Activated naive CD8-positive, alpha-beta T cell treated with anti-CD3 and anti-CD28 coated beads, Interleukin-2, amount 10 ng/mL, durations not matched to agents 7 days and 5 days (primary cell): ENCODE measurements at regions of chr4 and their contacts with region 1.

Region 1: DNA sequence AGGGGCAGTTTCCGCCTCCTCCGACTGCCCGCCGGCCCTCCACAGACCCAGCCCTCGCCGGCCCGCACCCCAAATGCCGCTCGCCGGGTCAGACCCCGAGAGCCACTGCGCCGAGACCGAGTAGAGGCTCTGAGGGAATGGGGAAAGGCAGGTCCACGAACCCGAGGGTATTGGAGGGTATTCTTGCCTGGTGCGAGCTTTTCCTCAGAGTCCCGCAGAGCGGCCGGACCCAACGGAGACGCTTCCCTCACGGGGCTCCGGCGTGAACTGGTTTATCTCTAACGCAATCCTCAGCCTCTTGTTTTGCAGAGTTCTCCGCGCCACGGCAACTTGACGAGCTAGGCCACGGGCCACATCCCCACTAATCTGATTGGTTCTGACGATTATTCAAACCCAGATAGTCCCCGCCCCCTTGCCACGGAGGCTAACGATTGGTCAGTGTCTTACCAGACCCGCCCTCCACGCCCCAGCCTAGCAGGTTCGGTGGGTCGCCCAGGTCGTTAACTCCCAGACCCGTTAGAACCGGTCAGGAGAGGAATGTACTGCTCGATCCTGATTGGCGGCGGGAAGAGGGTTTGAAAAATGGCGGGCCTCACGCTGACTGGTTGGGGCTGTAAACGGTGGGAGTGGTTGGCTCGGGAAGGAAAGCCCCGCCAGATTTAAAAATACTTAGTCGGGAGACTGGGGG is at the start of gene HMGB2:
- DNase-seq: peak; percentile 96
- ATAC-seq: peak; percentile 93
- H3K4me3 Mint-ChIP-seq: peak within 1 kb of the TSS; percentile 98
- H3K27ac Mint-ChIP-seq: peak within 1 kb of the TSS; percentile 99
- H3K4me1 Mint-ChIP-seq: peaks cover 29% of the 10 kb centered on the region
- H3K27me3 Mint-ChIP-seq: no peaks in the 10 kb centered on the region
- total RNA-seq, gene HMGB2: 592 to 620 TPM

Region 2: DNA sequence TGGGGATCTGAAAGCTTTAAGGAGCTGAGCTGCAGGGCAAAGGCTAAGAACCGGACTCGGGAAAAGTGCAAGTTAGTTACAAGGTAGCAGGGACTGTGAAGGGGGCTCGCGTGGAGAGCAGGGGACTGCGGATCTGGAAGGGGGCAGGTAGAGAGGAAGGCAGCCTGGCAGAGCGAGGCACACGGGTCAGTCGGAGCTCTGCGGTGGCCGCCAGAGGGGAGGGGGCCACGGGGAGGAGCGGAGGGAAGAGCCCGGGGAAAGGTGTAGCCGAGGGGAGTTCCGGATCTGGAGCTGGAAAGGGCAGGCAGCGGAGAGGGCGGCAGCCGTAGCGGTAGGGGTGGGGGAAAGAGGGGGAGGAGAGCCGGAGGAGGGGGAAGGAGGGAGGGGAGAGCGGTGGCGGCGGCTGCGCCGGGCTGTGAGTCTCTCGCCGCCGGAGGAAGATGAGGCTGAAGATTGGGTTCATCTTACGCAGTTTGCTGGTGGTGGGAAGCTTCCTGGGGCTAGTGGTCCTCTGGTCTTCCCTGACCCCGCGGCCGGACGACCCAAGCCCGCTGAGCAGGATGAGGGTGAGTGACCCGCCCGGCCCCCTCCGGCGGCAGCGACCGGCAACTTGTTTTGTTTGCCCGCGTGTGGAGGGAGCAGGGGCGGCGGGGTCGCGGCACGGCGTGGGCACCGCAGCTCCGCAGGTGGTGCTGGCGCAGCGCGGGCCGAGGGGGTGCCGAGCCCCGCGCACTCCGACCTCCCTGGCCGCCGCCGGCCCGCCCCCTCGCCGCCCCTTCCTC is 165.6 kb before region 1 on chr4 and contains the start of gene GALNT7:
- POLR2A ChIA-PET with region 1: interaction called, 30 read pairs
- DNase-seq: peak; percentile 71
- ATAC-seq: peak; percentile 41
- H3K4me3 Mint-ChIP-seq: peak within 1 kb of the TSS; percentile 97
- H3K27ac Mint-ChIP-seq: peak within 1 kb of the TSS; percentile 93
- H3K4me1 Mint-ChIP-seq: peaks cover 45% of the 10 kb centered on the region
- H3K27me3 Mint-ChIP-seq: no peaks in the 10 kb centered on the region
- total RNA-seq, gene GALNT7: 15.9 to 16.2 TPM

Region 3: DNA sequence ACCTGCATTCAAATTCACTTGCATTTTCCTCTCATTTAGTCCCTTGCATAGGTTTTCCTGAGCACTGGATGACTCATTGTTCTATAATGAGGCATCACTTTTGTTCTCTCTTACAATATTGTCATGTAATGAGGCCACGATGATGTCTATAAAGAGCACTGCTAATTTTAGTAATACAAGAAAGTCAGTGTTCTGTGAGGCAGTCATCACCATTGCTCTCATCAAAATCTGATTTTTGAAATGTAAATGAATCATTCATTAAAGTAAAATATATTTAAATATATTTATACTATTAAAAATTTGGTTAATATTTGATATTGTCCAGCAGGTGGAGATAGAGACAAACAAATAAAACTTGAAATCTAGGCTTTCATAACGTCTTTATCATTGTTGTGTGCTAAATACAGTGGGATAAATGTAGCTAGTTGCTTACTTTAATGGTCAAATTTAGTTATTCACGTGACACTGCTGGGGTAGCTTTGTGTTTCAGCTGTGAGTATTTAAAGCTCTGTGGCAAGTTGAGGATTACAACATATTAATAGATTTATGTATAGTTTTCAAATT is 15.5 kb before region 1 on chr4:
- POLR2A ChIA-PET with region 1: interaction called, 28 read pairs
- DNase-seq: no peak
- ATAC-seq: peak; percentile 33
- H3K4me3 Mint-ChIP-seq: no peak overlapping the region
- H3K27ac Mint-ChIP-seq: no peak overlapping the region
- H3K4me1 Mint-ChIP-seq: peaks cover 2% of the 10 kb centered on the region
- H3K27me3 Mint-ChIP-seq: no peaks in the 10 kb centered on the region

Region 4: GRCh38 chr4:173365359-173365996 is 31.2 kb after region 1 on chr4:
- POLR2A ChIA-PET with region 1: interaction called, 404 read pairs
- DNase-seq: no peak
- ATAC-seq: peak; percentile 11
- H3K4me3 Mint-ChIP-seq: peak overlapping the region; percentile 31
- H3K27ac Mint-ChIP-seq: peak overlapping the region; percentile 32
- H3K4me1 Mint-ChIP-seq: peaks cover 32% of the 10 kb centered on the region
- H3K27me3 Mint-ChIP-seq: no peaks in the 10 kb centered on the region

Region 5: DNA sequence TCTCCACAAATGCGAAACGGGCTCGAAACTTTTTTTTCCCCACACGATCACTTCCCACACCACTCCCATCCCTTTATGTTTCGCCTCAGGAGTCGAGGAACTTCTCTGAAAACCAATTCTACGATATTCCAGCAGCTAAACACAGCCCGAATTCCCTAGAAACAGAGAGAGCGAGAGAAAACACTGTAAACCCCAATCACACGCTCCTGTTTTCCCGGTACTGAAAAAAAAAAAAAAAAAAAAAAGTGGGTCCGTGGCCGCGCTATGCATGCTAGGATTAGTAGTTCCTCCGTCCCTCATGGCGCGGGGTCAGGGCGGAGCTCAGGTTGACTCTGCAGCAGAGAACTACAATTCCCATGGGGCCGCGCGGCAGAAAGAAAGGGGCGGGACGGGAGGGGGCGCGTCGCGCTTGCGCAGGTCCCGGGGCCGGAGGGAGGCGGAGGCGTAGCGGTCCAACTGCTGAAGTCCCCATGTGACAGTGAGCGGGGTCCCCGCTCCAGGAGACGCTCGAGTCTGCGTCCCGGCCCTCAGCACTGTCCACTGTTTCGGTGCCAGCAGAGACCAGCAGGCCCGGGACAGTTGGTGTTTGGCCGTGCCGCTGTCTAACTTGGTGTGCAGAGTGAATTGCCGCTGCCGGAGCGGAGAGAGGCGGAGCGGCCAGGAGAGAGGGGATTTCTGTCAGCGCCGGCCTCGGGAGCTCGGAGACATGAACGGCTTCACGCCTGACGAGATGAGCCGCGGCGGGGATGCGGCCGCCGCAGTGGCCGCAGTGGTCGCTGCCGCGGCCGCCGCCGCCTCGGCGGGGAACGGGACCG is 36.5 kb after region 1 on chr4 and contains the start of gene SAP30:
- POLR2A ChIA-PET with region 1: interaction called, 404 read pairs
- DNase-seq: peak; percentile 91
- ATAC-seq: peak; percentile 79
- H3K4me3 Mint-ChIP-seq: peak within 1 kb of the TSS; percentile 100
- H3K27ac Mint-ChIP-seq: peak within 1 kb of the TSS; percentile 95
- H3K4me1 Mint-ChIP-seq: peaks cover 38% of the 10 kb centered on the region
- H3K27me3 Mint-ChIP-seq: no peaks in the 10 kb centered on the region
- total RNA-seq, gene SAP30: 15.5 to 16.4 TPM